B cell (primary cell): ENCODE measurements at regions of chr19 and their contacts with region 1.

Region 1: GRCh38 chr19:7340959-7341837 is 7.5 kb upstream of the ARHGEF18 start:
- DNase-seq: peak; percentile 90
- ATAC-seq: no peak
- H3K4me3 ChIP-seq: peak overlapping the region in 1 of 5 experiments; percentile 28
- H3K4me3 Mint-ChIP-seq: peak overlapping the region; percentile 70
- H3K27ac ChIP-seq: peak overlapping the region; percentile 68 to 75
- H3K27ac Mint-ChIP-seq: peak overlapping the region; percentile 95
- H3K4me1 ChIP-seq: peaks cover 93 to 99% of the 10 kb centered on the region in 2 donors
- H3K4me1 Mint-ChIP-seq: peaks cover 80% of the 10 kb centered on the region
- H3K27me3 ChIP-seq: no peaks in the 10 kb centered on the region
- H3K27me3 Mint-ChIP-seq: no peaks in the 10 kb centered on the region
- CTCF ChIP-seq: peak; percentile 90

Region 2: GRCh38 chr19:7152568-7152967 is 188.6 kb before region 1 on chr19:
- CTCF ChIA-PET with region 1: interaction called, 105 read pairs
- POLR2A ChIA-PET with region 1: no interaction called
- intact Hi-C with region 1: no loop called
- DNase-seq: no peak
- ATAC-seq: no peak
- H3K4me3 ChIP-seq: no peak overlapping the region
- H3K4me3 Mint-ChIP-seq: no peak overlapping the region
- H3K27ac ChIP-seq: no peak overlapping the region
- H3K27ac Mint-ChIP-seq: peak overlapping the region; percentile 50
- H3K4me1 ChIP-seq: peaks cover 0 to 6% of the 10 kb centered on the region in 2 donors
- H3K4me1 Mint-ChIP-seq: peaks cover 2% of the 10 kb centered on the region
- H3K27me3 ChIP-seq: no peaks in the 10 kb centered on the region
- H3K27me3 Mint-ChIP-seq: no peaks in the 10 kb centered on the region
- CTCF ChIP-seq: no peak

Region 3: DNA sequence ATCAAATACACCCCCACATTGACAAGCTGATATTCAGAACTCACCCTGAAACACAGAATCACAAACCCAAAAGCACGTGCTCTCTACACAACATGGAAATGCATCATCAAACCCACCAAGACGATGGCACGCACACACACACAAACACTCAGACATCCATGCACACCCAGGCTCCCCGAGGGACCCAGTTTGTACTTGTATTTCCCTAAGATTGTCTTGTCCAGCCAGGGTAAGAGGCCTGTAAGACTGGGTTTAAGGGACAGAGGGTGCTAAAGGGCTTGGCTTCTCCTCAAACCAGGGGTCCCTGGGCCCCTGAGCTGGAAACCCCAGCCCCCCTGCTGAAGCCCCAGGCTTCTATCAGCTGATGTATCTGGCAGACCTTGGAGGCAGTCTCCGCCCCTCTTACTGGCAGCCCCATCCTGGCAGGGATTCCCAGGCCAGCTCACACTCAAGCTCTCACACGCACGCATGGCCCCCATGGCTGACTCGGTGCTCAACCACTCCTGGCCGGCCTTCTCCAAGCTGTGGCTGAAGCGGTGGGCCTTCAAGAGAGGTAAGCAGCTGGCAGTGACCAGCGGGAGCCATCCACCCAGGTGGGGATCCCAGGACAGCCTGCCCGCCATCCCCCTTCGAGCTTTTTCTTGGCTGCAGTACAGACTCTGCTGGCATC is 14.1 kb after region 1 on chr19:
- CTCF ChIA-PET with region 1: interaction called, 179 read pairs
- POLR2A ChIA-PET with region 1: interaction called, 29 read pairs
- intact Hi-C with region 1: no loop called
- DNase-seq: no peak
- ATAC-seq: no peak
- H3K4me3 ChIP-seq: no peak overlapping the region
- H3K4me3 Mint-ChIP-seq: no peak overlapping the region
- H3K27ac ChIP-seq: peak overlapping the region in 1 of 2 donors; percentile 15
- H3K27ac Mint-ChIP-seq: peak overlapping the region; percentile 89
- H3K4me1 ChIP-seq: peaks cover 64 to 85% of the 10 kb centered on the region in 2 donors
- H3K4me1 Mint-ChIP-seq: peaks cover 75% of the 10 kb centered on the region
- H3K27me3 ChIP-seq: no peaks in the 10 kb centered on the region
- H3K27me3 Mint-ChIP-seq: no peaks in the 10 kb centered on the region
- CTCF ChIP-seq: no peak

Region 4: GRCh38 chr19:7382694-7383093 is 41.5 kb after region 1 on chr19:
- CTCF ChIA-PET with region 1: interaction called, 22 read pairs
- POLR2A ChIA-PET with region 1: interaction called, 4 read pairs
- intact Hi-C with region 1: loop called (anchors 1 kb)
- DNase-seq: no peak
- ATAC-seq: no peak
- H3K4me3 ChIP-seq: no peak overlapping the region
- H3K4me3 Mint-ChIP-seq: no peak overlapping the region
- H3K27ac ChIP-seq: peak overlapping the region in 1 of 2 donors; percentile 52
- H3K27ac Mint-ChIP-seq: peak overlapping the region; percentile 37
- H3K4me1 ChIP-seq: peaks cover 0 to 12% of the 10 kb centered on the region in 2 donors
- H3K4me1 Mint-ChIP-seq: peaks cover 20% of the 10 kb centered on the region
- H3K27me3 ChIP-seq: no peaks in the 10 kb centered on the region
- H3K27me3 Mint-ChIP-seq: no peaks in the 10 kb centered on the region
- CTCF ChIP-seq: no peak

Region 5: DNA sequence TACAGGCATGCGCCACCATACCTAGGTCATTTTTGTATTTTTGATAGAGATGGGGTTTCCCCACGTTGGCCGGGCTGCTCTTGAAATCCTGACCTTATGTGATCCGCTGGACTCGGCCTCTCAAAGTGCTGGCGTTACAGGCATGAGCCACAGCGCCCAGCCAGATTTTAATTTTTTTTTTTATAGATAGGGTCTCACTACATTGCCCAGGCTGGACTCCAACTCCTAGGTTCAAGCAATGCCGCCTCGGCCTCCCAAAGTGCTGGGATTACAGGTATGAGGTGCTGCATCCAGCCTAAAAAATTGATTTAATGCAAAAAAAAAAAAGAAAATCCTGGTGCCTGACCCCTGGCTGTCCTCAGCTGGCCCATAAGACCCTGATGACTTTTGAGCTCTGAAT is 843.1 kb after region 1 on chr19:
- CTCF ChIA-PET with region 1: no interaction called
- POLR2A ChIA-PET with region 1: interaction called, 10 read pairs
- intact Hi-C with region 1: no loop called
- DNase-seq: no peak
- ATAC-seq: no peak
- H3K4me3 ChIP-seq: no peak overlapping the region
- H3K4me3 Mint-ChIP-seq: no peak overlapping the region
- H3K27ac ChIP-seq: no peak overlapping the region
- H3K27ac Mint-ChIP-seq: no peak overlapping the region
- H3K4me1 ChIP-seq: peaks cover 7% of the 10 kb centered on the region in 2 donors
- H3K4me1 Mint-ChIP-seq: peaks cover 25% of the 10 kb centered on the region
- H3K27me3 ChIP-seq: no peaks in the 10 kb centered on the region
- H3K27me3 Mint-ChIP-seq: no peaks in the 10 kb centered on the region
- CTCF ChIP-seq: no peak